PC-3 (cell line): ENCODE measurements at regions of chr15 and their contacts with region 1.

Region 1: GRCh38 chr15:34271493-34271892 is 46.7 kb downstream of the EMC4 start:
- DNase-seq: peak; percentile 80
- ATAC-seq: peak; percentile 46
- H3K4me3 ChIP-seq: no peak overlapping the region
- H3K27ac ChIP-seq: peak overlapping the region; percentile 74
- H3K4me1 ChIP-seq: peaks cover 50% of the 10 kb centered on the region
- H3K27me3 ChIP-seq: no peaks in the 10 kb centered on the region
- CTCF ChIP-seq: no peak

Region 2: GRCh38 chr15:34014556-34014955 is 256.9 kb before region 1 on chr15:
- CTCF ChIA-PET with region 1: no interaction called
- POLR2A ChIA-PET with region 1: no interaction called
- intact Hi-C with region 1: no loop called
- DNase-seq: no peak
- ATAC-seq: no peak
- H3K4me3 ChIP-seq: no peak overlapping the region
- H3K27ac ChIP-seq: no peak overlapping the region
- H3K4me1 ChIP-seq: no peaks in the 10 kb centered on the region
- H3K27me3 ChIP-seq: no peaks in the 10 kb centered on the region
- CTCF ChIP-seq: no peak

Region 3: GRCh38 chr15:34154725-34155204 is 116.7 kb before region 1 on chr15:
- CTCF ChIA-PET with region 1: no interaction called
- POLR2A ChIA-PET with region 1: no interaction called
- intact Hi-C with region 1: no loop called
- DNase-seq: peak; percentile 77
- ATAC-seq: peak; percentile 96
- H3K4me3 ChIP-seq: peak overlapping the region; percentile 34; the same call in 1 of the 2 replicates
- H3K27ac ChIP-seq: peak overlapping the region; percentile 90
- H3K4me1 ChIP-seq: 0 out of 2 replicates have a peak, but pooled peaks cover 4% of the 10 kb centered on the region
- H3K27me3 ChIP-seq: no peaks in the 10 kb centered on the region
- CTCF ChIP-seq: no peak

Region 4: DNA sequence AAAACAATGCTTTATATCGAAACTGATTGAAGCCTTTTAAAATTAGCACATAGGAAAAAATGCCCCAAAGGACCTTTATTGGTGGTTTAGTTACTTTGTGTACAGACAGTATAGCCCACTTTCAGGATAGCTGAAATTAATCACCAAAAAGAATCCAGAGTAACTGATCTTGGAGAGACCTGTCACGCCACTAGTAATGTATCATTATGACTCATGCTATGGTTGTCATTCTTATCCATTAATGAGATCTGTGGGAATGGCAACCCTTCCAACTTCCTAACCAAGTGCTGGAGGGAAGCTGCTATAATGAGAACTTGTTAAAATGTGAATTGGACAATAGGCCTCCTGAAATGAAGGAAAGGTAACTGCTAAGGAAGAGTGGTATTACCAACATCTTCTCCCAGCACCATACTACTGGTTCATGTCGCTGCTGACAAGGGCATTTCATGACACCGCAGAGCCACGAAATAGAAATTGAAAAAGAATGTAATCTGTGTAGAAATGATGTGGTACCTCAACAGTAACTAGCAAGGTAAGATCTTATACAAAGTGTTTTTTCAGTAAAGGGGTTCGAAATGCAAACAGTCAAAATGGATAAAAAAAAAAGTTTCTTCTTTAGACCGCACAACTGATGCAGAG is 53.8 kb before region 1 on chr15:
- CTCF ChIA-PET with region 1: no interaction called
- POLR2A ChIA-PET with region 1: no interaction called
- intact Hi-C with region 1: loop called (anchors 5 kb)
- DNase-seq: peak; percentile 95
- ATAC-seq: peak; percentile 76
- H3K4me3 ChIP-seq: peak overlapping the region; percentile 38
- H3K27ac ChIP-seq: peak overlapping the region; percentile 99
- H3K4me1 ChIP-seq: peaks cover 28% of the 10 kb centered on the region
- H3K27me3 ChIP-seq: no peaks in the 10 kb centered on the region
- CTCF ChIP-seq: no peak

Region 5: GRCh38 chr15:34239151-34239808 is 32.2 kb before region 1 on chr15:
- CTCF ChIA-PET with region 1: interaction called, 3 read pairs
- POLR2A ChIA-PET with region 1: no interaction called
- intact Hi-C with region 1: loop called (anchors 1 kb)
- DNase-seq: peak; percentile 99
- ATAC-seq: peak; percentile 97
- H3K4me3 ChIP-seq: 0 out of 2 replicates have a peak overlapping the region, but pooled peaks have one; percentile 20
- H3K27ac ChIP-seq: peak overlapping the region; percentile 98
- H3K4me1 ChIP-seq: peaks cover 38% of the 10 kb centered on the region
- H3K27me3 ChIP-seq: no peaks in the 10 kb centered on the region
- CTCF ChIP-seq: no peak

Region 6: DNA sequence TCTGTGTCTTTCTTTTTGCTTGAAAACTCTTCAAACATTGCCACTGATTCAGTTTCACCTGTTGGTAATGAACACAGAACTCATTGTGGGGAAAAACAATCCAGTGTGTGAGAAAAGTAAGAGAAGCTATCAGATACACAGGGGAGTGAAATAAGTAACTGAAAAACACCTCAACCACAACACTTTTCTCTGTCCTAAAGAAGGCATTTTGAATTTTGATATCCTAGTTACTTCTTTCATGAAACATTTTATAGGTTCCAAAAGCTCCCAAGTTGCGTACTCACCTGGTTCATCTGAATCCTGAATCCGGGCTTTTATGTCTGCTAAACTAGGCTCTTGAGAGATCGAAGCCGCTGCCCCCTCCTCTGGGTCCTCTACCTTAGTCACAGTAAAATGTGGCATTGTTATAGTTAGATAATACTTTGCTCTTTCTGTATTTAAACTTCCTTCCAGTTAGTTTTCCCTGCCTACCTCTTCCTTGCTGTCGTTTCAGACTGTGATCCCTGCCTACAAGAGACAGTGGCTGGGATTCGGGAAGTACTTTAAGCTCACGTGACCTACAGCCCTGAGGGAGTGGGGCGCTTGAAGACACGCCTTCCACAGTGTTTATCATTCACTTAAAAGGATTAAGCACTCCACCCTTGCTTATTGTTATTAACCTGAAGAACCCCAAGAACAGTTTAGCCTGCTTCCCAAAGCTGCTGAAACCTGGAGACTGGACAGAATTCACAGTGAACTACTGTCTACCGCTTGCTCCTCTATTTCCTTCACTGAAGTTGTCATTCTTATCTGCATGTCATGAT is 47.0 kb after region 1 on chr15:
- CTCF ChIA-PET with region 1: no interaction called
- POLR2A ChIA-PET with region 1: interaction called, 10 read pairs
- intact Hi-C with region 1: no loop called
- DNase-seq: peak; percentile 63
- ATAC-seq: peak; percentile 95
- H3K4me3 ChIP-seq: peak overlapping the region; percentile 65
- H3K27ac ChIP-seq: peak overlapping the region; percentile 12; the same call in 1 of the 2 replicates
- H3K4me1 ChIP-seq: peaks cover 18% of the 10 kb centered on the region
- H3K27me3 ChIP-seq: no peaks in the 10 kb centered on the region
- CTCF ChIP-seq: no peak

Region 7: GRCh38 chr15:34342737-34343575 is 71.5 kb after region 1 on chr15 and contains the starts of genes NOP10 and NUTM1:
- CTCF ChIA-PET with region 1: interaction called, 3 read pairs
- POLR2A ChIA-PET with region 1: no interaction called
- intact Hi-C with region 1: loop called (anchors 2 kb)
- DNase-seq: peak; percentile 91
- ATAC-seq: peak; percentile 75
- H3K4me3 ChIP-seq: peak within 1 kb of the TSS; percentile 85
- H3K27ac ChIP-seq: peak within 1 kb of the TSS; percentile 88
- H3K4me1 ChIP-seq: peaks cover 29% of the 10 kb centered on the region
- H3K27me3 ChIP-seq: no peaks in the 10 kb centered on the region
- CTCF ChIP-seq: peak; percentile 93
- total RNA-seq, gene NOP10: 291 and 323 TPM in 2 replicates
- total RNA-seq, gene NUTM1: 0.04 TPM in 1 of 2 replicates, not detected in the other

Region 8: DNA sequence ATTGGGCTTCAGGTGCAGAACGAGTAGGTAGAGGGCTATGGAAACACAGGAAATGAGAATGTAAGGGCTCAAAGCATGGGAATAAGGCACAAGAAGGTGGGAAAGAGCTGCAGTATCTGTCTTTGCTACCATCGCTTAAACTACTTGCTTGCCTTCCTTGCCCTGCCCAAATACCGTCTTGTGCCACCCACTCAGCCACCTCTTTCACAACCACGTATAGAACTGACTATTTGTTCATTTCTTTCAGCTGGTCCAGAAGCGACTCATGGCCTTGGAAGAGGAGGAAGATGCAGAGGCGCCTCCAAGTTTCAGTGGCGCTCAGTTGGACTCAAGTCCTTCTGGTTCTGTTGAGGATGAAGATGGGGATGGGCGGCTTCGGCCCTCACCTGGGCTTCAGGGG is 83.7 kb after region 1 on chr15:
- CTCF ChIA-PET with region 1: no interaction called
- POLR2A ChIA-PET with region 1: no interaction called
- intact Hi-C with region 1: no loop called
- DNase-seq: no peak
- ATAC-seq: no peak
- H3K4me3 ChIP-seq: no peak overlapping the region
- H3K27ac ChIP-seq: no peak overlapping the region
- H3K4me1 ChIP-seq: peaks cover 14% of the 10 kb centered on the region
- H3K27me3 ChIP-seq: no peaks in the 10 kb centered on the region
- CTCF ChIP-seq: no peak

Region 9: GRCh38 chr15:34855397-34855796 is 583.9 kb after region 1 on chr15:
- CTCF ChIA-PET with region 1: no interaction called
- POLR2A ChIA-PET with region 1: no interaction called
- intact Hi-C with region 1: no loop called
- DNase-seq: peak; percentile 83
- ATAC-seq: peak; percentile 75
- H3K4me3 ChIP-seq: 0 out of 2 replicates have a peak overlapping the region, but pooled peaks have one; percentile 34
- H3K27ac ChIP-seq: peak overlapping the region; percentile 98
- H3K4me1 ChIP-seq: peaks cover 28% of the 10 kb centered on the region
- H3K27me3 ChIP-seq: no peaks in the 10 kb centered on the region
- CTCF ChIP-seq: no peak